Mammary epithelial cell (primary cell): ENCODE measurements at regions of chr16 and their contacts with region 1.

Region 1: GRCh38 chr16:30853758-30854157 is 40.1 kb downstream of the BCL7C start:
- DNase-seq: peak; percentile 79
- H3K4me3 ChIP-seq: no peak overlapping the region
- H3K27ac ChIP-seq: peak overlapping the region; percentile 18
- H3K4me1 ChIP-seq: peaks cover 20% of the 10 kb centered on the region
- H3K27me3 ChIP-seq: no peaks in the 10 kb centered on the region
- CTCF ChIP-seq: peak in 1 of 2 donors; percentile 3

Region 2: GRCh38 chr16:30761928-30762810 is 91.6 kb before region 1 on chr16 and contains the starts of genes CFAP119 and RNF40:
- CTCF ChIA-PET with region 1: no interaction called
- dilution Hi-C with region 1: no loop called
- in situ Hi-C with region 1: no loop called
- intact Hi-C with region 1: no loop called
- DNase-seq: peak; percentile 97
- H3K4me3 ChIP-seq: peak within 1 kb of the TSS; percentile 46 to 66 (median 55)
- H3K27ac ChIP-seq: peak within 1 kb of the TSS; percentile 61
- H3K4me1 ChIP-seq: peaks cover 27% of the 10 kb centered on the region
- H3K27me3 ChIP-seq: no peaks in the 10 kb centered on the region
- CTCF ChIP-seq: no peak
- total RNA-seq, gene CFAP119: 1.5 to 8.3 TPM
- total RNA-seq, gene RNF40: 62.8 to 66.4 TPM

Region 3: DNA sequence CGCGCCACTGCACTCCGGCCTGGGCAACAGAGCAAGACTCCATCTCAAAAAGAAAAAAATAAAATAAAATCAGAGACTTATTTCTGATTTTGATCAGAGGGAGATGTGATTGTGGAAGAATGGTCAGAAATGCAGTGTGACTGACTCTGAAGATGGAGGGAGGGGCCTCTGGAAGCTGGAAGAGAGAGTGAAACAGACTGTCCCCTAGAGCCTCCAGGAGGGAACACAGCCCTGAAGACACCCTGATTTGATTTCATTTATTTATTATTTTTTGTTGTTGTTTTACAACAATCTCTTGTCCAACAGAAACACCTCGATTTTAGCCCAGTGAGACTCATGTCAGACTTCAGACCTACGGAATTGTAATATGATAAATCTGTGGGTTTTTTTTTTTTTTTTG is 14.0 kb after region 1 on chr16:
- CTCF ChIA-PET with region 1: no interaction called
- dilution Hi-C with region 1: no loop called
- in situ Hi-C with region 1: no loop called
- intact Hi-C with region 1: no loop called
- DNase-seq: no peak
- H3K4me3 ChIP-seq: no peak overlapping the region
- H3K27ac ChIP-seq: no peak overlapping the region
- H3K4me1 ChIP-seq: no peaks in the 10 kb centered on the region
- H3K27me3 ChIP-seq: no peaks in the 10 kb centered on the region
- CTCF ChIP-seq: peak in 1 of 2 donors; percentile 25

Region 4: GRCh38 chr16:30910427-30911029 is 56.8 kb after region 1 on chr16:
- CTCF ChIA-PET with region 1: no interaction called
- dilution Hi-C with region 1: no loop called
- in situ Hi-C with region 1: loop called in 1 of 2 experiments (anchors 10 kb)
- intact Hi-C with region 1: no loop called
- DNase-seq: no peak
- H3K4me3 ChIP-seq: no peak overlapping the region
- H3K27ac ChIP-seq: no peak overlapping the region
- H3K4me1 ChIP-seq: no peaks in the 10 kb centered on the region
- H3K27me3 ChIP-seq: no peaks in the 10 kb centered on the region
- CTCF ChIP-seq: no peak

Region 5: DNA sequence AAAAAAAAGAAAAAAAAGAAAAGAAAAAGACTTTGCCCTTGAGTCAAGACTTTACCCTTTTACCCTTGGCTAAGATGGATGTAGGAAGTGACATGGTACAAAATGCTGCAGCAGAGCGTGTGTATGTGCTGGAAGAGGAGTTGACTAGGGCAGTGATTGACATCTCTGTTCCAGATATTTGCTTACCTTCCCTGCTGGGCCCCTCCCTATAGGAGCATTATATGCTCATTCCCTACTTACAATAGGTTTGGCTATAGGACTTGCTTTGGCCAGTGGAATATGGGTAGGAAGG is 190.4 kb after region 1 on chr16:
- CTCF ChIA-PET with region 1: no interaction called
- dilution Hi-C with region 1: no loop called
- in situ Hi-C with region 1: no loop called
- intact Hi-C with region 1: no loop called
- DNase-seq: no peak
- H3K4me3 ChIP-seq: no peak overlapping the region
- H3K27ac ChIP-seq: no peak overlapping the region
- H3K4me1 ChIP-seq: no peaks in the 10 kb centered on the region
- H3K27me3 ChIP-seq: no peaks in the 10 kb centered on the region
- CTCF ChIP-seq: no peak